Activated naive CD4-positive, alpha-beta T cell treated with anti-CD3 and anti-CD28 coated beads for 36 hours (primary cell): ENCODE measurements at regions of chr2 and their contacts with region 1.

Region 1: GRCh38 chr2:204967199-204967960 is 422.1 kb downstream of the PARD3B start:
- DNase-seq: peak; percentile 59
- H3K4me3 Mint-ChIP-seq: peak overlapping the region; percentile 7
- H3K27ac Mint-ChIP-seq: peak overlapping the region; percentile 76
- H3K4me1 Mint-ChIP-seq: peaks cover 49% of the 10 kb centered on the region
- H3K27me3 Mint-ChIP-seq: no peaks in the 10 kb centered on the region

Region 2: DNA sequence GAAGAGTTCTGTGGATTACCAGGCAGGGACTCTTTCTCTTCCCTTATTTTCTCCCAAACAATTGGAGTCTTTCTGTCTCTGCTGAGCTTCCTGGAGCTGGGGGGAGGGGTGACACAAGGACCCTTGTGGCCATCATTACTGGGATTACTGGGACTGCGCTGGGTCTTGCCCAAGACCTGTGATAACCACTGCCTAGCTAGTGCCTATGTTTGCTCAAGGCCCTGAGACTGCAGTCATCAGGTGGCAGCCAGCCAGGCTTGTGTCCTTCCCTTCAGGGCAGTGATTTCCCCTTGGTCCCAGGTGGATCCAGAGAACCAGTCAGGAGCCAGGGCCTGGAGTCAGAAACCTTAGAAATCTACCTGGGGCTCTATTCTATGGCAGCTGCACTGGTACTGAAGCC is 66.5 kb before region 1 on chr2:
- CTCF ChIA-PET with region 1: no interaction called
- intact Hi-C with region 1: loop called (anchors 2 kb)
- DNase-seq: no peak
- H3K4me3 Mint-ChIP-seq: no peak overlapping the region
- H3K27ac Mint-ChIP-seq: no peak overlapping the region
- H3K4me1 Mint-ChIP-seq: peaks cover 9% of the 10 kb centered on the region
- H3K27me3 Mint-ChIP-seq: no peaks in the 10 kb centered on the region

Region 3: DNA sequence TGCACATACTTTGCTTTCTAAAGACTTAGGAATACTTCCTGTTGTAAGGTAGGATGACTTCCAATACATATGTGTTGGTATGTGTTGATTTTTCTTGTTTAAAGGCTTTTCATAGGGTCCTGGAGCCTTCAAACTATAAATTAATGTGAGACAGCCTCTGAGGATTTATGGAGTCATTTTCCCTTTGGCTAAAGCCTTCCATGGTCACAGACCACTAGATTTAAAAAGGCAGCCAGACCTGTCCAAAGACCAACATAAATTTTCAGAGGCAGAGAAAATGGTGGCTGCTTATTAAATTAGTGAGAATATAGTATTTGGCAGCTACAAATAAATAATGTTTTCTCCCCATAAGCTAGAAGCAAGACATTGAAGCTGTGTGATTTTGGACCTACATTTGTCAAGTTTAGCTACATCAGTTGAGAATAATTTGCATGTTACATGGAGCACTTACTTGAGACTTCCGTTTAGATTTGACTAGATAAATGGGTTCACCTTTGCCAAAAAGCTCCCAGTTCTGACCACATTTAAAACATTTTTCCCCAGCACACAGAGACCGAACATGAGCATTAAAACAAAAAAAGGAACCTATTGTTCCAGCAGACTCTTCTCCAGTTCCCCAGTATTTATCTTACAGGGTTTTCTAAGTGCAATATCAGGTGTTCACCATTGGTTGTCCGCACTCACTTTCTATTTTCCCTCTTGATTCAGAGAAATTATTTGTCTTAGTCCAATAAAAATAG is 19.2 kb before region 1 on chr2:
- CTCF ChIA-PET with region 1: no interaction called
- intact Hi-C with region 1: loop called (anchors 1 kb)
- DNase-seq: peak; percentile 12
- H3K4me3 Mint-ChIP-seq: no peak overlapping the region
- H3K27ac Mint-ChIP-seq: peak overlapping the region; percentile 66
- H3K4me1 Mint-ChIP-seq: peaks cover 53% of the 10 kb centered on the region
- H3K27me3 Mint-ChIP-seq: no peaks in the 10 kb centered on the region

Region 4: GRCh38 chr2:205024822-205025518 is 57.6 kb after region 1 on chr2:
- CTCF ChIA-PET with region 1: no interaction called
- intact Hi-C with region 1: loop called (anchors 2 kb)
- DNase-seq: peak; percentile 63
- H3K4me3 Mint-ChIP-seq: no peak overlapping the region
- H3K27ac Mint-ChIP-seq: no peak overlapping the region
- H3K4me1 Mint-ChIP-seq: peaks cover 16% of the 10 kb centered on the region
- H3K27me3 Mint-ChIP-seq: no peaks in the 10 kb centered on the region

Region 5: GRCh38 chr2:205077159-205077558 is 109.8 kb after region 1 on chr2:
- CTCF ChIA-PET with region 1: no interaction called
- intact Hi-C with region 1: loop called (anchors 1 kb)
- DNase-seq: peak; percentile 9
- H3K4me3 Mint-ChIP-seq: peak overlapping the region; percentile 46
- H3K27ac Mint-ChIP-seq: peak overlapping the region; percentile 50
- H3K4me1 Mint-ChIP-seq: peaks cover 53% of the 10 kb centered on the region
- H3K27me3 Mint-ChIP-seq: no peaks in the 10 kb centered on the region